Lower leg skin (tissue), 4 donors: ENCODE measurements at regions of chr10 and their contacts with region 1.

Region 1: DNA sequence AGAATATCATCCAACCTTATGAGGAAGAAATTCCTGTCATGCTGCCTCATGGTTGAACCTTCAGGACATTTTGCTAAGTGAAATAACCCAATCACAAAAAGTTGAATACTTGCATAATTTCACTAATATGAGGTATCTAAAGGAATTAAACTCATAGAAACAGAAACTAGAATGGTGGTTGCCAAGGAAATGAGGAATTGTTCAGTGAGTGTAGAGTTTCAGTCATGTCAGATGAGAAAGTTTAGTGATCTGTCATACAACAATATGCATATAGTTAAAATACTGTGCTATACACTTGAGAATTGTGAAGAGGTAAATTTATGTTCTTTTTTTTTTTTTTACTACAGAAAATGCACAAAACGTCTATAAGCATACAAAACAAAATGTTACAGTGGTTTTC is 60.7 kb downstream of the R3HCC1L start:
- DNase-seq: no peak
- H3K4me3 ChIP-seq: no peak overlapping the region
- CTCF ChIP-seq: no peak
- POLR2A ChIP-seq: no peak

Region 2: GRCh38 chr10:98486421-98486820 is 291.3 kb after region 1 on chr10:
- intact Hi-C with region 1: loop called (anchors 5 kb)
- DNase-seq: peak in 1 of 2 donors; percentile 31
- H3K4me3 ChIP-seq: no peak overlapping the region
- CTCF ChIP-seq: no peak
- POLR2A ChIP-seq: no peak